ENCODE measurements at regions of chr17 and their contacts with region 1.

Region 1: DNA sequence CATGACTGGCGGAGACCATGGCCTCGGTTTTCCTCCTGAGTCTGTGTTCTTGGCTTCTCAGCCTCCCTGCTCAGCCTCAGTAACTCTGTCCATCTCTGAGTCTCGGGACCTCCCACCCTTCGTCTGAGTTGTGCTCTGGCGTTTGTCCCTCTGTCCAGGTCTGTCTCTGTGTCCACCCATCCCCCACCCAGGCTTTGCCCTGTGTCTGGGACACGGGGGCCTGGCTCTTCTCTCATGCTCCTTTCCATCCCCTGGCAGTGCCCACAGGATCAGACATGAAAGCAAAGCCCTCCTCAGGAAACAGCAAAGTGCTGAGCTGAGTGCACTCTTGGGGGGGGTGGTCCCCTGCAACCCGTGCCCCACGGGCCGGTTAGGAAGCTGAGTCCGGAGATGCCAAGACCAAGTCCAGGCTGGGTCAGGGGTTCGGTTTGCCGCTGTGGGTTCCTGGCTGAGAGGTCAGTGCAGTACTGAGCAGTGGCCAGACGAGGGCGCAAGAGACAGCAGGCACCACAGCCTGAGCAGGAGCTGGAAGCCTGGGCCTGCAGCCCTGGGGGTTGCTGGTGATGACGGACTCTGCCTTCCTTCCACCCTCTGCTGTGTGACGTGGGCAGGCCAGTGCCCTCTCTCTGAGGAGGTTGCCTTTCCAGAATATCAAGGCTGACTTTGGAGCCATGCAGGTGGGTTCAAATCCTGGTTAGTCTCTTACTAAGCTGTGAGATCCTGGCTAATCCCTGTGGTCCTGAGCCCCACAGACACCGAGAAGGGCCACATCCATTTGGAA is 2.5 kb downstream of the P2RX1 start:
- DNase-seq: no peak
- H3K4me3 ChIP-seq: no peak overlapping the region
- CTCF ChIP-seq: peak; percentile 99

Region 2: GRCh38 chr17:3827124-3827773 is 86.5 kb before region 1 on chr17:
- CTCF ChIA-PET with region 1: no interaction called
- POLR2A ChIA-PET with region 1: no interaction called
- DNase-seq: no peak
- H3K4me3 ChIP-seq: no peak overlapping the region
- CTCF ChIP-seq: peak; percentile 66

Region 3: DNA sequence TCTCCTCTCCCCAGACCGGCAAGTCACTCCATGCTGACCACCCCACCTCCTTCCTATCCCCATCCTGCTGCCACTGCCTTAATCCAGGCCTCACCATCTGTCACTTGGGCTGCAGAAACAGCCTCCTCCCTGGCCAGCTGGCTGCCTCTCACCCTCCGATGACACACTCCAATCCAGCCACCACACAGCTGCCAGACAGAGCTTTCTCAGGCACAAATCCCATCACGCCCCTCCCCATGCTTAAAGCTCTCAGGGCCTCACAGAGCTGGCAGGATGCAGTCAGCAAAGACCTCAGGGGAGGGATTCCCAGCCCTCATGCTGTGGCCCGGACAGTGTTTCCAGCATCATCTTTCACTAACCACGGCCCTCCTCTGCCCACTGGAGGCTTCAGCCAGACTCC is 34.5 kb before region 1 on chr17:
- CTCF ChIA-PET with region 1: interaction called, 12 read pairs
- POLR2A ChIA-PET with region 1: no interaction called
- DNase-seq: no peak
- H3K4me3 ChIP-seq: no peak overlapping the region
- CTCF ChIP-seq: no peak

Region 4: DNA sequence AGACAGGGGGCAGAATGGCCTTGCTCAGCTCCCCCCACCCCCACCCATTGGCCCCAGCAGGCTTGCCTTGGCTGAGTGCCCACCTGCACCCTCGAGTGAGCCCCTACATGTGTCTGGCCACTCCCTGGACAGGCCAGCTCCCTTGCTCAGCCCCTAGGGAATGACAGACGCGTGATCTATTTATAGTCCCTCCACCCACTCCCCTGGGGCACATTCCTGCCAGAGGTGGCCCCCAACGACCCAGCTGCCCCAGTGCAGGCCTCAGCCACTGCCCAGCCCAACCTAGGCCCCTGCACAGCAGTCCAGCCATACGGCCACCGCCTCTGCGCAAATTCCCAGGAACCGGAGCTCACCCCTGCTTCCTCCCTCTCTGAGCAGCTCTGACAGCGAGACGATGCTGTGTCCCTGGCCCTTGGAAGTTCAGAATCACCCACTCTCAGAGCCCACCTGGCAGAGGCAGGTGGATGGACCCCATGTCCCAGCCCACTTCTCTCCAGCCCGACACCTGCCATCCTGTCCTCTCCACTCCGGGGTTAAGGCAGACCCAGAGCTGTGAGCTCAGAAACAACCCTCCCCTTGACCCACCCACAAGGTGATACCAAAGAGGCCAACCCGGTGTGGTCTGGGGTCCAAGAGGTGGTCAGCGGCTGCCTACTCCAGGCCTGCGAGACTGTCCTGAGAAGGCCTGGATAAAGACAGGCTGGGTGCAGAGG is 14.1 kb after region 1 on chr17:
- CTCF ChIA-PET with region 1: interaction called, 55 read pairs
- POLR2A ChIA-PET with region 1: no interaction called
- DNase-seq: no peak
- H3K4me3 ChIP-seq: no peak overlapping the region
- CTCF ChIP-seq: no peak

Region 5: GRCh38 chr17:4004517-4005295 is 91.0 kb after region 1 on chr17:
- CTCF ChIA-PET with region 1: interaction called, 137 read pairs
- POLR2A ChIA-PET with region 1: no interaction called
- DNase-seq: no peak
- H3K4me3 ChIP-seq: no peak overlapping the region
- CTCF ChIP-seq: peak; percentile 81

Region 6: DNA sequence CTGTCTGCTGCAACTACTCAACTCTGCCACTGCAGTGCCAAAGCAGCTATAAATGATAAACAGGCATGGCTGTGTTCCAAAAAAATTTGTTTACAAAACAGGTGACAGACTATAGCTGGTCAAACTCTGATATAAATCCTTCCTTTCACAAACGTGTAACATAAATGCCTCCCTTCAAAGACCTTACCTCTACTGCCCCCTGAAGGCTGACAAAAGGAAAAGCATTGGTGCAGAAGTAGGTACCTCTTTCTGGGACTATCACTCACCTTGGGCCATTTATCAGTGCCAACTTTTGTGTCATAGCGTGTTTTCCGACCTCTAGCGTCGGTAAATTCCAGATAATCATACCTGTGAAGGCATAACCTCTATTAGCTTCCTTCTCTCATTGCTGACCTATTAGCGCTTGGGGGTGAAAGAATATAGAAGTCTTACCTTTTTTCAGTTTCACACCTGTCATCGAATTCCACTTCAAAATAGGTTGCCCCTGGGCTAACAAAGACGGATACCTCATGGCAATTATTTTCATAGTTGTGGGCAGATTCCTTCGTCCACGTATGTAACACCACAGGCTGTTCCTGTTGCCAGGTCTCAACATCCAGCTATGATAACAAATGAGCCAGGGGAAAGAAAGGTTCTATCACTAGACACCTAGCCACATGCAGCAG is 161.2 kb after region 1 on chr17:
- CTCF ChIA-PET with region 1: interaction called, 62 read pairs
- POLR2A ChIA-PET with region 1: no interaction called
- DNase-seq: no peak
- H3K4me3 ChIP-seq: no peak overlapping the region
- CTCF ChIP-seq: peak; percentile 59

Region 7: GRCh38 chr17:4249452-4250029 is 335.8 kb after region 1 on chr17:
- CTCF ChIA-PET with region 1: no interaction called
- POLR2A ChIA-PET with region 1: no interaction called
- DNase-seq: no peak
- H3K4me3 ChIP-seq: no peak overlapping the region
- CTCF ChIP-seq: peak; percentile 41